ENCODE measurements at regions of chr3 and their contacts with region 1.

Region 1: GRCh38 chr3:154252759-154253638 is 71.3 kb downstream of the DHX36 start:
- DNase-seq: peak; percentile 92
- H3K4me3 ChIP-seq: no peak overlapping the region
- H3K27ac ChIP-seq: no peak overlapping the region
- H3K4me1 ChIP-seq: no peaks in the 10 kb centered on the region
- H3K27me3 ChIP-seq: no peaks in the 10 kb centered on the region
- CTCF ChIP-seq: peak; percentile 84 to 94 (median 93)
- POLR2A ChIP-seq: no peak

Region 2: GRCh38 chr3:153574445-153574844 is 678.6 kb before region 1 on chr3:
- intact Hi-C with region 1: no loop called
- DNase-seq: no peak
- H3K4me3 ChIP-seq: no peak overlapping the region
- H3K27ac ChIP-seq: no peak overlapping the region
- H3K4me1 ChIP-seq: no peaks in the 10 kb centered on the region
- H3K27me3 ChIP-seq: no peaks in the 10 kb centered on the region
- CTCF ChIP-seq: no peak
- POLR2A ChIP-seq: no peak

Region 3: GRCh38 chr3:154095832-154096421 is 157.1 kb before region 1 on chr3:
- intact Hi-C with region 1: loop called (anchors 5 kb)
- DNase-seq: no peak
- H3K4me3 ChIP-seq: no peak overlapping the region
- H3K27ac ChIP-seq: no peak overlapping the region
- H3K4me1 ChIP-seq: no peaks in the 10 kb centered on the region
- H3K27me3 ChIP-seq: no peaks in the 10 kb centered on the region
- CTCF ChIP-seq: peak; percentile 18 to 60 (median 44)
- POLR2A ChIP-seq: no peak

Region 4: DNA sequence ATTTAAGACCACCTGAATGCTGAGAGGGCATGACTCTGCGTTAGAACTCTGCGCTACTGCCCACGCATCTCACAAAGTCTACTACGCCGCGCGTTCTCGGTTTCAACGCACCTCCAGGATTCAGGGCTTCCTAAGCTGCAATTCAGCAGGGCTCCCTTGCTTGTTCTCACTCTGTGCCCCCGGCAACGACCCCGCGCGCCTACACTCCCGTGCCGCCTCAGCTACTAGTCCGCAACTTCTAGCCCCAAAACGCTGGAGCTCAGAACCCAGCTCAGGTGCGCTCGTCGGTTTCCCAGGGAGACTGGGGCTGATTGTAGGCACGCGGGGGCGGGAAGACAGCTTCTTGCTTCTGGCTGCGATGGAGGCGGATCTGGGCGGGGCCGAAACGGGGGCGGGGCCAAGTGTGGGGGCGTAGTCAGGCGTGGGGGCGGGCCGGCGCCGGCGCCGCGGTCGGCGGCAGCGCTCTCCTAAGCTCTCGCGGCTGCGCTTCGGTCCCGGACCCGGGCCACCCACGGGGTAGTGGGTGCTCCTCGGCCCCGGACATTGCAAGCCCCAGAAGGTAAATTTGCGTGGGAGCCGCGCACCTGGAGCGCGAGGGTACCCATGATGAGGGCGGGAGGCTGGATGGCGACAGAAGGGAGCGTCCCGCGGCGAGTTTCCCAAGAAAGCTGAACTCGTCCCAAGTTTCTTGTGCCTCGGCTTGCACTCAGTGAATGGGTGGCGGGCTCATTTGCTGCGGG is 131.9 kb before region 1 on chr3 and contains the start of gene ARHGEF26:
- intact Hi-C with region 1: loop called (anchors 5 kb)
- DNase-seq: peak; percentile 92
- H3K4me3 ChIP-seq: peak within 1 kb of the TSS; percentile 55 to 69
- H3K27ac ChIP-seq: peak within 1 kb of the TSS; percentile 55 to 75
- H3K4me1 ChIP-seq: no peaks in the 10 kb centered on the region
- H3K27me3 ChIP-seq: no peaks in the 10 kb centered on the region
- CTCF ChIP-seq: no peak
- POLR2A ChIP-seq: peak; percentile 67
- total RNA-seq, gene ARHGEF26: 15.4 to 26.8 TPM

Region 5: GRCh38 chr3:154801729-154802128 is 548.7 kb after region 1 on chr3:
- intact Hi-C with region 1: no loop called
- DNase-seq: no peak
- H3K4me3 ChIP-seq: no peak overlapping the region
- H3K27ac ChIP-seq: no peak overlapping the region
- H3K4me1 ChIP-seq: no peaks in the 10 kb centered on the region
- H3K27me3 ChIP-seq: no peaks in the 10 kb centered on the region
- CTCF ChIP-seq: no peak
- POLR2A ChIP-seq: no peak

Measured in prostate gland (tissue), 2 donors.